Right lobe of liver (tissue), 6 donors: ENCODE measurements at regions of chr11 and their contacts with region 1.

Region 1: DNA sequence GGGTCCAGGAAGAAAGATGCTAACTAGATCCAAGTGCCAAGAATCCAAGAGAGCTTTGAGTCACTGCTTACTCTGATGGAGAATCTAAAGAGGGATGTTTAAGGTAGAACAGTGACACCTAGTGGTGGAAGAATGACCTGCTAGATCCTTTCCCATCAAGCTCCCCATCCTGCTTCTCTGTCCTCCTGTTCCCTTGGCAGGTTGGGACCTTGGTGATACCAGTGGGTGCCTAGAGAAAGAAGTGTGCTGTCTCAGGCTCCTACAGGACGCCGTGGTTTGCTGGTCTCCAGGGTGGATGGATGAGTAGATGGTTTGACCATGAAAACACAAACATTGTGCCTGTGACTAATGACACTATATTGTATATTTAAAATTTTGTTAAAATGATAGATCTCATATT is 383.7 kb downstream of the TMEM135 start:
- DNase-seq: peak in 1 of 3 donors; percentile 44
- ATAC-seq: peak; percentile 92 to 97 (median 94)
- H3K4me3 ChIP-seq: no peak overlapping the region
- H3K27ac ChIP-seq: no peak overlapping the region
- H3K4me1 ChIP-seq: no peaks in the 10 kb centered on the region
- H3K27me3 ChIP-seq: no peaks in the 10 kb centered on the region
- CTCF ChIP-seq: peak; percentile 79 to 91 (median 86)
- POLR2A ChIP-seq: no peak

Region 2: GRCh38 chr11:87193756-87194470 is 227.5 kb before region 1 on chr11:
- intact Hi-C with region 1: no loop called
- DNase-seq: no peak
- ATAC-seq: no peak
- H3K4me3 ChIP-seq: no peak overlapping the region
- H3K27ac ChIP-seq: no peak overlapping the region
- H3K4me1 ChIP-seq: no peaks in the 10 kb centered on the region
- H3K27me3 ChIP-seq: no peaks in the 10 kb centered on the region
- CTCF ChIP-seq: no peak
- POLR2A ChIP-seq: no peak

Region 3: DNA sequence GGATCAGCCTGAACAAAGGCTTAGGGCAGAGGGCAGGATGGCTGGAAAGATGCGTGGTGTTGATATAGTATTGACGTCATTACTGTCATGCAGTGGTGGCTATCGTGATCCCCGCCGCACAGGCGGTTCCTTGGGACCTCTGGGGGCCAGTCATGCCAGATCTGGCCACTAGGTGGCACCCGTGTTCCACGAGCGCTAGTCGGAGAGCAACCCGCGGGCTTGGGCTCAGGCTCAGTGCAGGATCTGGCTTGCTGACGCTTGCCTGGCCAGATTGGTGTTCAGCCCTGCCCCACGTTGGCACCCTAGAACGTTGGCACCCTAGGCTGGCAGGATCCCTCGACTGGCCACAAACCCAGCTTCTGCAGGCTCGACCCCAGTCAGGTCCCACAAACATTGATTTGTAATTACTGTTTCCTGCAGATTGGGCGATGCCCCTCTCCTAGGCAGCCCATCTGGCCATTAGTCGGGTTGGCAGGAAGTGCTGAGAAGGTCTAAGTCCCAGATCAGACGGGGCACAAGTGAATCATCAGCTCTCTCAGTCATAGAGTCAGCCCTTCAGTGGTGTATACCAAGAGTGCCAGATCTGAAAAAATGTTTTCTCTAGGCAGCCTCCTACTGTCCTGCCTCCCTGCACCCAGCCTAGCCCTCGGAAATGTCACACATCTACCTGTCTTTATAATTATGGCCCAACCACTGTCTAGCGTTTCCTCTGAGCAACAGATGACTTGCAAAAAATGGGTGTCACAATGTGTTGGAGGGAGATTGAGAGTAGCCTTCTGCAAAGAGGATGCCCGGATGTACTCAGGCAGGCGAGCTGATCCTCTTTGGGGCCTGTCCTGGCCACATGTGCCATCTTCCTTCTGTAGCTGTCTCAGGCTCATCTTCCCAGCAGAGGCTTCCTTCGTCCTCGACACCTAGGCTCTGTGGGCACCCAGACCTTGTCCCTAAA is 68.4 kb before region 1 on chr11:
- intact Hi-C with region 1: loop called in 1 of 2 experiments (anchors 5 kb)
- DNase-seq: peak; percentile 87 to 89 (median 89)
- ATAC-seq: peak; percentile 99 to 100 (median 100)
- H3K4me3 ChIP-seq: no peak overlapping the region
- H3K27ac ChIP-seq: no peak overlapping the region
- H3K4me1 ChIP-seq: no peaks in the 10 kb centered on the region
- H3K27me3 ChIP-seq: no peaks in the 10 kb centered on the region
- CTCF ChIP-seq: peak; percentile 99 to 100 (median 99)
- POLR2A ChIP-seq: no peak

Region 4: GRCh38 chr11:87368858-87369480 is 52.5 kb before region 1 on chr11:
- intact Hi-C with region 1: loop called in 1 of 2 experiments (anchors 10 kb)
- DNase-seq: no peak
- ATAC-seq: peak; percentile 33 to 73 (median 48)
- H3K4me3 ChIP-seq: no peak overlapping the region
- H3K27ac ChIP-seq: no peak overlapping the region
- H3K4me1 ChIP-seq: no peaks in the 10 kb centered on the region
- H3K27me3 ChIP-seq: no peaks in the 10 kb centered on the region
- CTCF ChIP-seq: no peak
- POLR2A ChIP-seq: no peak